Left cardiac atrium (tissue), 4 donors: ENCODE measurements at regions of chr12 and their contacts with region 1.

Region 1: DNA sequence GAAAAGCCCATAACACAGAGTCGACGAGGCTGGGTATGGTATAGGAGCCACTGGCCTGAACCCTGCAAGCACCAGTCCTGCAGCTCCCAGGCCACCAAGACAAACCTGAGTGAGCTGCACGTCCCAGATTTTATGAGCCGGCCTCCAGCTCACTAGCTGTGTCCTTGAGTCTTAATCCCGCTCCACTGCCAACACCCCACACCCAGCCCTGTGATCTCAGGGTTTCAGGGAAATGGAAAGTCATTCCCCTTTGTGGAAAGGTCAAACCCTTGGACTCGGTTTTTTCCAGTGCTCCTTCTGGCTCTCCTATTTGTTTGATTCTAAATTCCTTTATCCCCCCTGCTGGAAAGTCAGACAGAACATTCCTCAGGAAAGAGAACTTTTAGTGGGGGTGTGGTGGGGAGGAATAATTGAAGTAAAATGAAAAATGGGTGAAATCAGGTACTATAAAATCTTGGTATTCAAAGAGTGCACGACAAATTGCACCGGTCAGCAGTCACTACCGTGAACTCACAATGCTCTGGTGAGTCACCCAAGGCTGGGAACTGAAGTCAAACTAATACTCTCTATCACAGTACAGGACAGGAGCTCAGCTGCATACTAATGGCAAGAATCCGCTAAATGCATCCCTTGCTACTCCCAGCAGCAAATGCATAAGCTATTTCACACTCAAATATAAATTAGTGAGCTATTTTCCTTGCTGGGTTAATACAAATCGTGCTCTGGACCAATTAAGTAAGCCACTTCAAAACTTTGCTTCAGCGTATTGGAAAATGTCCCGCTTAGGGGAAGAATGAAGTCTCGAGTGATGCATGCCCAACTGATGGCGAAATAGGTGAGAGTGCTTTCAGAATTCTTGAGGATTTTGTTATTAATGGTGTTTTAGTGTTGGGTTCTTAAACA is 9.0 kb downstream of the PITPNM2 start:
- DNase-seq: peak; percentile 79
- ATAC-seq: peak; percentile 58 to 87

Region 2: DNA sequence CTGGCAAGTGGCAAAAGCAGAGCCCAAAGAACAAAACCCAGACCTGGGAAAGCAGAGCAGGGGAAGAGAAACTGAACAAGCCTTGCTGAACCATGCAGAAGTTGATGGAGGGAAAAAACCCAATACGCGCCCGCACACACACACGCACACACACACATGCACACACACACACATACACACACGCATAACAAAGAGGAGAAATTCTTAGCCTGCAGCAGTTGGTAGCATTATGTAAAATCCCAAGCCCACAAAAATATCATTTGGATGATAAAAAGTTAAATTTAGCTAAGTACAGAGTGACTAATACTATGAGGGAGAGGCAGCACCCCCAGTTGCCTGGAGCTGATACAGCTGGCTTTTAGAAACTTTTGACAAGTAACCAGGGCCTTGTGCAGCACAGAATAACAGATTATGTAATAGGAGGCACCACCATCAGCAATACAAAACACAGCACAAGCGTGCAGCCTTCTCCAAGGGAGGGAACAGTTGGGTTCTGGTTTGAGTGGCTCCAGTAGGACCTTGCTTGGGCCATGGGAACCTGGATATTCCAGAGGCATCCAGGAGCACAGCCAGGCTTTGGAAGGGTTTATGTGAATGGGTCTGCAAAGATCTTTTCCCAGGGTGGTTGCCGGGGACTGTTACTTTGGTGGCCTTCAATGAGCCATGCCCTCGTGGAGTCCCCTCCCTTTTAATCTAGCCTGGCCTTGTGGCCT is 26.3 kb before region 1 on chr12:
- intact Hi-C with region 1: loop called in 1 of 2 experiments (anchors 2 kb)
- DNase-seq: peak; percentile 66
- ATAC-seq: peak; percentile 93 to 94